GM12878 (cell line): ENCODE measurements at regions of chr15 and their contacts with region 1.

Region 1: GRCh38 chr15:36970522-36970921 is 129.8 kb downstream of the MEIS2 start:
- DNase-seq: no peak
- ATAC-seq: no peak
- H3K4me3 ChIP-seq: no peak overlapping the region
- H3K27ac ChIP-seq: no peak overlapping the region
- H3K4me1 ChIP-seq: peaks cover 3% of the 10 kb centered on the region; the same call in 1 of the 2 replicates
- H3K27me3 ChIP-seq: no peaks in the 10 kb centered on the region
- CTCF ChIP-seq: no peak
- EP300 ChIP-seq: no peak
- POLR2A ChIP-seq: no peak
- RAD21 ChIP-seq: no peak

Region 2: DNA sequence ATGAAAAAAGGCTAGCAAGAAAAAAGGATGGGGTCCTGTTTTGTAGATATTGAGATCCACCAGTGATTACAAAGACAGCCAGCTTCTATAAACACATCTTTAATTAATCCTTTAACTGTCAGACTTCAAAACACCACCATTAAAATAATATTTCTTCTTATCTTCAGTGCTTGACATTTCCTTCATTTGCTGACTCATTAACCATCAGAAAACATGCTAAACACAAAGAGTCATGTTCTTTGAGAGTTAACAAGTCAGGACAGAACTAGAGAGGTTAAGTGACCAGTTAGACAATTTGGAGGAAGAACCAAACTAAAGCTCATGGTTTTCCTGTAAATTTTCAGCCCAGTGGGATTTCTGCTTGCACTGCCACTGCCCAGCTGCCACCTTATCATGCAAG is 18.4 kb after region 1 on chr15:
- CTCF ChIA-PET with region 1: no interaction called
- POLR2A ChIA-PET with region 1: interaction called, 3 read pairs
- RAD21 ChIA-PET with region 1: interaction called, 3 read pairs
- SMC1A ChIA-PET with region 1: interaction called, 13 read pairs
- in situ Hi-C with region 1: no loop called
- intact Hi-C with region 1: no loop called
- DNase-seq: no peak
- ATAC-seq: no peak
- H3K4me3 ChIP-seq: no peak overlapping the region
- H3K27ac ChIP-seq: no peak overlapping the region
- H3K4me1 ChIP-seq: no peaks in the 10 kb centered on the region
- H3K27me3 ChIP-seq: no peaks in the 10 kb centered on the region
- CTCF ChIP-seq: no peak
- EP300 ChIP-seq: no peak
- POLR2A ChIP-seq: no peak
- RAD21 ChIP-seq: no peak